CD8-positive, alpha-beta T cell (primary cell): ENCODE measurements at regions of chr2 and their contacts with region 1.

Region 1: DNA sequence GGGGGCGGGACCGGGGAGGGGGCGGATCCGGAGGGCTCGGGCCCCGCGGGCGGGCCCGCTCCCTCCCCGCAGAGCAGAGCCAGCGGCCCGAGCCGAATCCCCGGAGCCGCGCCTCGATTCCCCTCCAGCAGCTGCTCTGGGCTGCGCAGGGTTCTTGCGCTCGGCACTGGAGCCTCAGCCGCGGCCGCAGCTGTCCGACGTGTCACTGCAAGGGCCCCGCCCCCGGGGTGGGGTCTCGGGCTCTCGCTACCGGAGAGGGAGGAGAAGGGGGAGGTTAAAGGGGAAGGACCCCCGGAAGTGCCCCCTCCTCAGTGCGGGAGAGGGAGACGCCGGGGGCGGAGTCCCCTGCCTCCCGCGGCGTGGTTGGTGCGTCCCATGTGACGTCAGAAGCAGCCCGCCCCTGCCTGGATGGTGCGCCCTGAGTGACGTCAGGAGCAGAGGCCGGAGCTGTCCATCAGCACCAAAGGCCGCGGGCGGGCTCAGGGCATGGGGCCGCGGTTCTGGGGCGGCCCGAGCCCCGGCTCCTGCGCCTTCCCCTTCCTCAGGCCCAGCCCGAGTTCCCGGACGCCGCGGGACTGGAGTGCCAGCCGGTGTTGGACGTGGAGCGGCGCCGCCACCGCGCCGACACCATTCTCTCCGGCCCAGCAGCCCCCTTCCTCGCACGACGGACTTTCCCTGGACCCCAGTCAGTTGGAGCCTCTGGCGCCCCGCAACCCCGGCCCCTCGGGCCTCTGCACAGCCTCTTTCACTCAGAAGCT is at the starts of genes CHPF and TMEM198:
- DNase-seq: peak; percentile 82 to 95 (median 90)
- ATAC-seq: peak; percentile 69
- H3K4me3 ChIP-seq: peak within 1 kb of the TSS; percentile 66 to 80
- H3K4me3 Mint-ChIP-seq: peak within 1 kb of the TSS; percentile 87
- H3K27ac ChIP-seq: peak within 1 kb of the TSS; percentile 61 to 73
- H3K27ac Mint-ChIP-seq: peak within 1 kb of the TSS; percentile 84
- H3K4me1 ChIP-seq: peaks cover 18% of the 10 kb centered on the region
- H3K4me1 Mint-ChIP-seq: peaks cover 25% of the 10 kb centered on the region
- H3K27me3 ChIP-seq: no peaks in the 10 kb centered on the region
- H3K27me3 Mint-ChIP-seq: peaks cover 12% of the 10 kb centered on the region
- CTCF ChIP-seq: no peak
- total RNA-seq, gene CHPF: 5.2 to 6.2 TPM
- total RNA-seq, gene TMEM198: 0.31 to 0.46 TPM

Region 2: DNA sequence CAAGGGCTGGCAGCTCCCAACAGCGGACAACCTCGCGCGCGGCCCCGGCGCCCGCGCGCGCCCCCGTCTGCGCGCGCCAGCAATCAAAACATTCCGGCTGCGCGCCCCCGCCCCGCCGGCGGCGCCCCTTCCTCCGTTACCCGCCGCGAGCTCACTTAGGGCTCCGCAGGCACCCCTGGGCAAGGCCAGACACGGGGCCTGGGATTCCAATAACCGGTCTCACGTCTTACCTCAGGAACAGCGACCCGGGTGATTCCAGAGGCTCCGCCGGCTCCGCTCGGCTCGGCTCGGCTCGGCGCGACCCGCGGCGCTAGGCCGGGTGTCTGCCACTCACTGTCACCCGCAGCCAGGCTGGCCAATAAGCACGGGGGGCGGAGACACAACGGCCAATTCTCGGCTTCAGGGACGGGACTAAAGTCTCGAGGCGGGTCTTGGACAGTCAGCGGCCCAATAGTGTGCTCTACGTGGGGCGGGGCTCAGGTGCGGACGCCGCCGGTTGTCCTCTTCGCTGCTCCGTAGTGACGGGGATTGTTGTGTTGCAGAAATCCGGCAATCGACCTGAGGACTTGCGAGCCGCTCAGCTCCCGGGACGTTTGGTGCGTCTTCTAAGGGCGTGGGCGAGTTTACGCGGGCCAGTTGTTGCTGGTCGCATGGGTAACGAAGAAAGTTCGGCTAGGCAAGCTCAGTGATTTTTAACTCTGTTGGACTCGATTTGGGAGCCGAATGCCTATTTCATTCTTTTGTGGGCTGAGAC is 314.3 kb before region 1 on chr2 and contains the starts of genes ANKZF1 and ATG9A:
- CTCF ChIA-PET with region 1: no interaction called
- POLR2A ChIA-PET with region 1: no interaction called
- intact Hi-C with region 1: loop called in 1 of 2 experiments (anchors 5 kb)
- DNase-seq: peak; percentile 95 to 99 (median 98)
- ATAC-seq: peak; percentile 96
- H3K4me3 ChIP-seq: peak within 1 kb of the TSS; percentile 83 to 93
- H3K4me3 Mint-ChIP-seq: peak within 1 kb of the TSS; percentile 99
- H3K27ac ChIP-seq: peak within 1 kb of the TSS; percentile 79 to 95
- H3K27ac Mint-ChIP-seq: peak within 1 kb of the TSS; percentile 98
- H3K4me1 ChIP-seq: peaks cover 39% of the 10 kb centered on the region
- H3K4me1 Mint-ChIP-seq: peaks cover 58% of the 10 kb centered on the region
- H3K27me3 ChIP-seq: no peaks in the 10 kb centered on the region
- H3K27me3 Mint-ChIP-seq: no peaks in the 10 kb centered on the region
- CTCF ChIP-seq: no peak
- total RNA-seq, gene ANKZF1: 97.4 to 99.5 TPM
- total RNA-seq, gene ATG9A: 103 to 116 TPM

Region 3: GRCh38 chr2:219498280-219499057 is 45.3 kb before region 1 on chr2 and contains the start of gene GMPPA:
- CTCF ChIA-PET with region 1: interaction called, 4 read pairs
- POLR2A ChIA-PET with region 1: no interaction called
- intact Hi-C with region 1: loop called (anchors 1 kb)
- DNase-seq: peak; percentile 82 to 95 (median 89)
- ATAC-seq: peak; percentile 90
- H3K4me3 ChIP-seq: peak within 1 kb of the TSS; percentile 75 to 83
- H3K4me3 Mint-ChIP-seq: peak within 1 kb of the TSS; percentile 89
- H3K27ac ChIP-seq: peak within 1 kb of the TSS; percentile 52 to 59
- H3K27ac Mint-ChIP-seq: peak within 1 kb of the TSS; percentile 84
- H3K4me1 ChIP-seq: peaks cover 39% of the 10 kb centered on the region
- H3K4me1 Mint-ChIP-seq: peaks cover 35% of the 10 kb centered on the region
- H3K27me3 ChIP-seq: peaks cover 25 to 34% of the 10 kb centered on the region in 2 experiments
- H3K27me3 Mint-ChIP-seq: peaks cover 33% of the 10 kb centered on the region
- CTCF ChIP-seq: no peak
- total RNA-seq, gene GMPPA: 9.4 to 15.0 TPM

Region 4: GRCh38 chr2:219560037-219560892 is 16.5 kb after region 1 on chr2:
- CTCF ChIA-PET with region 1: interaction called, 53 read pairs
- POLR2A ChIA-PET with region 1: interaction called, 3 read pairs
- intact Hi-C with region 1: loop called (anchors 1 kb)
- DNase-seq: peak in 3 of 9 experiments; percentile 40 to 56 (median 45)
- ATAC-seq: peak; percentile 88
- H3K4me3 ChIP-seq: no peak overlapping the region
- H3K4me3 Mint-ChIP-seq: no peak overlapping the region
- H3K27ac ChIP-seq: no peak overlapping the region
- H3K27ac Mint-ChIP-seq: no peak overlapping the region
- H3K4me1 ChIP-seq: no peaks in the 10 kb centered on the region
- H3K4me1 Mint-ChIP-seq: no peaks in the 10 kb centered on the region
- H3K27me3 ChIP-seq: no peaks in the 10 kb centered on the region
- H3K27me3 Mint-ChIP-seq: peaks cover 32% of the 10 kb centered on the region
- CTCF ChIP-seq: peak; percentile 77

Region 5: GRCh38 chr2:219642465-219643080 is 98.8 kb after region 1 on chr2:
- CTCF ChIA-PET with region 1: interaction called, 67 read pairs
- POLR2A ChIA-PET with region 1: no interaction called
- intact Hi-C with region 1: loop called in 1 of 2 experiments (anchors 1 kb)
- DNase-seq: peak; percentile 76 to 95 (median 89)
- ATAC-seq: peak; percentile 100
- H3K4me3 ChIP-seq: no peak overlapping the region
- H3K4me3 Mint-ChIP-seq: no peak overlapping the region
- H3K27ac ChIP-seq: no peak overlapping the region
- H3K27ac Mint-ChIP-seq: no peak overlapping the region
- H3K4me1 ChIP-seq: no peaks in the 10 kb centered on the region
- H3K4me1 Mint-ChIP-seq: peaks cover 7% of the 10 kb centered on the region
- H3K27me3 ChIP-seq: peaks cover 0 to 1% of the 10 kb centered on the region in 2 experiments
- H3K27me3 Mint-ChIP-seq: peaks cover 33% of the 10 kb centered on the region
- CTCF ChIP-seq: peak; percentile 99

Region 6: DNA sequence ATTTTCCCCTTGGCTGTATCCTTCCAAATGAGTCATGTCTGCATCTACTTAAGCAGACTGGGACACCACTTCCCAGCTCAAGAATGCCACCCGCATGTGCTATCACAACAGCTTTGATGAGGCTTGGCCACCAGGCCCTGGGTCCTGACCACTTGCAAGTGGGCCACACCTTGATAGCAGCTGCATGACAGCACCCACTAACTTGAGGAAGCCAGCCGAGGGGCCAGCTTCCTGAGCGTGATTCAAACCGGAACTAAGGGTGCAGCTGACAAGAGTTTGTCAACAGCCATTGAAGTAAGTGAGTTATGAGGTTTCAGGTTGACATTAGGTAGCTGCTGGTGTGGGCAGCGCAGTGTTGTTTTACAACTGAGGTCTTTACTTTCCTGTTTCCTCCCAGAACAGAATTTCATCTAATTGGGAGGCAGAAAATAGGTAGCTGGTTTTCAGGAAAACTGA is 1973.9 kb after region 1 on chr2:
- CTCF ChIA-PET with region 1: no interaction called
- POLR2A ChIA-PET with region 1: no interaction called
- intact Hi-C with region 1: loop called in 1 of 2 experiments (anchors 5 kb)
- DNase-seq: peak; percentile 61 to 93 (median 77)
- ATAC-seq: peak; percentile 68
- H3K4me3 ChIP-seq: peak overlapping the region in 1 of 2 experiments; percentile 37
- H3K4me3 Mint-ChIP-seq: no peak overlapping the region
- H3K27ac ChIP-seq: peak overlapping the region; percentile 80 to 87
- H3K27ac Mint-ChIP-seq: no peak overlapping the region
- H3K4me1 ChIP-seq: peaks cover 42% of the 10 kb centered on the region
- H3K4me1 Mint-ChIP-seq: no peaks in the 10 kb centered on the region
- H3K27me3 ChIP-seq: no peaks in the 10 kb centered on the region
- H3K27me3 Mint-ChIP-seq: no peaks in the 10 kb centered on the region
- CTCF ChIP-seq: no peak